Activated CD4-positive, alpha-beta T cell treated with anti-CD3 and anti-CD28 coated beads for 36 hours (primary cell): ENCODE measurements at regions of chr11 and their contacts with region 1.

Region 1: GRCh38 chr11:62665075-62665598 is at the starts of genes C11orf98 and CSKMT:
- DNase-seq: peak; percentile 97
- ATAC-seq: peak; percentile 90
- H3K4me3 Mint-ChIP-seq: peak within 1 kb of the TSS; percentile 93
- H3K27ac Mint-ChIP-seq: peak within 1 kb of the TSS; percentile 89
- H3K4me1 Mint-ChIP-seq: peaks cover 38% of the 10 kb centered on the region
- H3K27me3 Mint-ChIP-seq: no peaks in the 10 kb centered on the region
- total RNA-seq, gene C11orf98: 108 to 135 TPM
- total RNA-seq, gene CSKMT: 12.6 to 31.3 TPM

Region 2: GRCh38 chr11:61422226-61422625 is 1242.9 kb before region 1 on chr11:
- CTCF ChIA-PET with region 1: no interaction called
- POLR2A ChIA-PET with region 1: no interaction called
- intact Hi-C with region 1: no loop called
- DNase-seq: no peak
- ATAC-seq: no peak
- H3K4me3 Mint-ChIP-seq: no peak overlapping the region
- H3K27ac Mint-ChIP-seq: no peak overlapping the region
- H3K4me1 Mint-ChIP-seq: peaks cover 57% of the 10 kb centered on the region
- H3K27me3 Mint-ChIP-seq: no peaks in the 10 kb centered on the region

Region 3: GRCh38 chr11:62612366-62613290 is 52.5 kb before region 1 on chr11 and contains the starts of genes EML3 and ROM1:
- CTCF ChIA-PET with region 1: interaction called, 4 read pairs
- POLR2A ChIA-PET with region 1: interaction called, 4 read pairs
- intact Hi-C with region 1: loop called (anchors 1 to 2 kb)
- DNase-seq: peak; percentile 91
- ATAC-seq: peak; percentile 78
- H3K4me3 Mint-ChIP-seq: peak within 1 kb of the TSS; percentile 91
- H3K27ac Mint-ChIP-seq: peak within 1 kb of the TSS; percentile 90
- H3K4me1 Mint-ChIP-seq: peaks cover 37% of the 10 kb centered on the region
- H3K27me3 Mint-ChIP-seq: no peaks in the 10 kb centered on the region
- total RNA-seq, gene EML3: 101 to 112 TPM
- total RNA-seq, gene ROM1: 1.5 to 1.9 TPM

Region 4: GRCh38 chr11:62645956-62646824 is 18.9 kb before region 1 on chr11 and contains the start of gene GANAB:
- CTCF ChIA-PET with region 1: interaction called, 4 read pairs
- POLR2A ChIA-PET with region 1: interaction called, 21 read pairs
- intact Hi-C with region 1: loop called (anchors 1 to 2 kb)
- DNase-seq: peak; percentile 100
- ATAC-seq: peak; percentile 99
- H3K4me3 Mint-ChIP-seq: peak within 1 kb of the TSS; percentile 93
- H3K27ac Mint-ChIP-seq: peak within 1 kb of the TSS; percentile 93
- H3K4me1 Mint-ChIP-seq: peaks cover 34% of the 10 kb centered on the region
- H3K27me3 Mint-ChIP-seq: no peaks in the 10 kb centered on the region
- total RNA-seq, gene GANAB: 208 to 218 TPM

Region 5: DNA sequence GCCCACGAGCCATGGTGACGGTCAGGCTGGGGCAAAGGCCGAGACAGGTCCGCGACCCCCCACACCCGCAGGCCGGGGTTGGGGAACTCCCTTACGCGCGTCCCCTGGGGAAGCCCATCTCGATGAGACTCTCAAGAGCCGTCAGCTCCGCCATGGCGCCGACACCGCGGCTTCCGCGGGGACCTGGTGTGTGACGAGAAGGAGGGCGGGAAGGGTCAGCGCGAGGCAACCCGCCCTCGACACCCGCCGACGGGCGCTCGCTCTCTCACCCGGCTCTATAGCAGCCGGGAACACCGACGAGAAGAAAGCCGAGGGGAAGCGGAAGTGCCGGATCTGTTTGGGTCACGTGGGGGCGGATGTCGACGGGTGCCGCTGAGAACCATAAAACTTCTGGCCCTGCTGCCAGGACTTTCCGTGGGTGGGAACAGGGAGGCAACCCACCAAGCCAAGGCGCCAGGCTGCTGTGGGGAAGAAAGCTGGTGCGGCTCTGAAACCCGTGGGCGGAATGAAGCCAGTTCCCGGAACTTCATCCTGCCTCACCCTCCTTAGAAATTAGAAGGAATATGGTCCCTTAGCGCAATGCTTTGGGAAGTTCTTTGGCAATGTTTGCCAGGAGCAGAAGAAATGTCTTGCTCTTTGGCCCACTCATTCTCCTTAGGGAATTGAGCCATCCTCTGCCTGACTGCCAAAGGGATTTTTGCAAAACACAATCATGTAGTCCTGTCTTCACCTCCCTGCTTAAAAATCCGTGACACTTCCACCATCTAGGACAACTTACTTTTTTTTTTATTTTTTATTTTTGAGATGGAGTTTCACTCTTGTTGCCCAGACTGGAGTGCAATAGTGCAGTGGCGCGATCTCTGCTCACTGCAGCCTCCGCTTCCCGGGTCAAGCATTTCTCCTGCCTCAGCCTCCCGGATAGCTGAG is 13.9 kb after region 1 on chr11 and contains the start of gene UBXN1:
- CTCF ChIA-PET with region 1: interaction called, 6 read pairs
- POLR2A ChIA-PET with region 1: interaction called, 19 read pairs
- intact Hi-C with region 1: no loop called
- DNase-seq: peak; percentile 93
- ATAC-seq: peak; percentile 88
- H3K4me3 Mint-ChIP-seq: peak within 1 kb of the TSS; percentile 82
- H3K27ac Mint-ChIP-seq: peak within 1 kb of the TSS; percentile 92
- H3K4me1 Mint-ChIP-seq: peaks cover 28% of the 10 kb centered on the region
- H3K27me3 Mint-ChIP-seq: no peaks in the 10 kb centered on the region
- total RNA-seq, gene UBXN1: 95.6 to 119 TPM

Region 6: GRCh38 chr11:62855571-62856332 is 190.6 kb after region 1 on chr11:
- CTCF ChIA-PET with region 1: interaction called, 5 read pairs
- POLR2A ChIA-PET with region 1: interaction called, 14 read pairs
- intact Hi-C with region 1: loop called in 1 of 2 experiments (anchors 1 kb)
- DNase-seq: peak; percentile 99
- ATAC-seq: peak; percentile 83
- H3K4me3 Mint-ChIP-seq: peak overlapping the region; percentile 99
- H3K27ac Mint-ChIP-seq: peak overlapping the region; percentile 97
- H3K4me1 Mint-ChIP-seq: peaks cover 53% of the 10 kb centered on the region
- H3K27me3 Mint-ChIP-seq: no peaks in the 10 kb centered on the region